Vagina (tissue), 2 donors: ENCODE measurements at regions of chr18 and their contacts with region 1.

Region 1: DNA sequence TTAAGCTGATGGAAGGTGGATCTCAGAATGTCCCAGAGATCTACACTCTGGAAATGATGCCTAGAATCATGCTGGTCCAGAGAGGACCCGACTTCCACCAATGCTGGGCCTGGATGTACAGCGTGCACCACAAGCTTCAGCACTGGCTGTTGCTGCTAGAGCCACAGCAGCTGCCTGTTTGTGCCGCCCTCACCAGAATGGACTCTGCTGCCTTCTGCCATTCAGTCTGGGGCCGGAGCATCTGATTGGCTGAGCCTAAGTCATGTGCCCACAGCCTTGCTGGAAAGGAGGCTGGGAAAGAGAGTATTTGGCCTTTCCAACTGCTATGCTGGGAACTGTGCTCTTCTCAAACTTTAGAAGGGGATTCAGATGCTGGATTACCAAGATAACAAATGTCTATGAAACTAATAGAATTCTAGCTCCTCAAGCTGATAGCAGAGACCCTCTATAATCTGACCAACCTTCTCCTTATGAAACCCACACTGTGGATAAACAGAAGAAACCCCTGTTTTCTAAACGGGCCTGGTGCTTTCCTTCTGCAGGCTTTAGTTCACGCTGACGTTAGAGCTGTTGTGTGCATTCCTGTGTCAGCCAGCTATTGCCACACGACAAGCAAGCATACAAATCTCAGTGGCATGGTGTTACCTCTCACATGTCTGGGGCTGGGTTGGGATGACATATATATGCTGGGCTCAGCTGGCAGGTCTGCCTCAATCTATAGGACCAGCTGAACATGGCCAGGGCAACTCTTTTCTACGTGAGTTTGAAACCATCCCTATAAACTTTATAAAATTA is 4.1 kb upstream of the LOXHD1 start:
- DNase-seq: no peak
- H3K4me3 ChIP-seq: no peak overlapping the region
- H3K27ac ChIP-seq: no peak overlapping the region
- H3K4me1 ChIP-seq: no peaks in the 10 kb centered on the region
- H3K27me3 ChIP-seq: no peaks in the 10 kb centered on the region
- CTCF ChIP-seq: no peak
- POLR2A ChIP-seq: no peak

Region 2: DNA sequence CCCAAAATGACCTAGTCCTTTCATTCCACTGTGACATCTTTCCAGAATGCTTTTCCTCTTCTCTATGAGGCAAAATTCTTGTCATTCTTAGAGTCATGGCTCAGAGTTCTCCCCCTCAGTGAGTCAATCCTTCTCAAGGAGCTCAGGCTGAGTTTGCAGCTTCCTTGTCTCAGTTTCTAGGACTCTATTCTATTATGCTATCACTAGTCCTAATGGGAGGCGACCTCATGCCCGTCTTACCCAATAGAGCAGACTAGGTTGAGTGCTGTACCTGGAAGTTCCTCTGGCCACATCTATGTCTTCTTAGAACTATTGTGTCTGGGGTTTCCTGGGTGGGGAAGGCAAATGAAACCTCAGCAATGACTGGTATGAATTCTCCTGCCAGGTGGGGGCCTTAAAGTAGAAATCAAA is 505.5 kb before region 1 on chr18:
- intact Hi-C with region 1: loop called (anchors 10 kb)
- DNase-seq: no peak
- H3K4me3 ChIP-seq: no peak overlapping the region
- H3K27ac ChIP-seq: no peak overlapping the region
- H3K4me1 ChIP-seq: no peaks in the 10 kb centered on the region
- H3K27me3 ChIP-seq: no peaks in the 10 kb centered on the region
- CTCF ChIP-seq: no peak
- POLR2A ChIP-seq: no peak

Region 3: GRCh38 chr18:46173393-46174341 is 487.5 kb before region 1 on chr18:
- intact Hi-C with region 1: loop called (anchors 5 kb)
- DNase-seq: no peak
- H3K4me3 ChIP-seq: peak overlapping the region; percentile 97 to 99
- H3K27ac ChIP-seq: peak overlapping the region; percentile 85
- H3K4me1 ChIP-seq: peaks cover 41% of the 10 kb centered on the region
- H3K27me3 ChIP-seq: no peaks in the 10 kb centered on the region
- CTCF ChIP-seq: peak; percentile 60 to 94 (median 62)
- POLR2A ChIP-seq: no peak

Region 4: DNA sequence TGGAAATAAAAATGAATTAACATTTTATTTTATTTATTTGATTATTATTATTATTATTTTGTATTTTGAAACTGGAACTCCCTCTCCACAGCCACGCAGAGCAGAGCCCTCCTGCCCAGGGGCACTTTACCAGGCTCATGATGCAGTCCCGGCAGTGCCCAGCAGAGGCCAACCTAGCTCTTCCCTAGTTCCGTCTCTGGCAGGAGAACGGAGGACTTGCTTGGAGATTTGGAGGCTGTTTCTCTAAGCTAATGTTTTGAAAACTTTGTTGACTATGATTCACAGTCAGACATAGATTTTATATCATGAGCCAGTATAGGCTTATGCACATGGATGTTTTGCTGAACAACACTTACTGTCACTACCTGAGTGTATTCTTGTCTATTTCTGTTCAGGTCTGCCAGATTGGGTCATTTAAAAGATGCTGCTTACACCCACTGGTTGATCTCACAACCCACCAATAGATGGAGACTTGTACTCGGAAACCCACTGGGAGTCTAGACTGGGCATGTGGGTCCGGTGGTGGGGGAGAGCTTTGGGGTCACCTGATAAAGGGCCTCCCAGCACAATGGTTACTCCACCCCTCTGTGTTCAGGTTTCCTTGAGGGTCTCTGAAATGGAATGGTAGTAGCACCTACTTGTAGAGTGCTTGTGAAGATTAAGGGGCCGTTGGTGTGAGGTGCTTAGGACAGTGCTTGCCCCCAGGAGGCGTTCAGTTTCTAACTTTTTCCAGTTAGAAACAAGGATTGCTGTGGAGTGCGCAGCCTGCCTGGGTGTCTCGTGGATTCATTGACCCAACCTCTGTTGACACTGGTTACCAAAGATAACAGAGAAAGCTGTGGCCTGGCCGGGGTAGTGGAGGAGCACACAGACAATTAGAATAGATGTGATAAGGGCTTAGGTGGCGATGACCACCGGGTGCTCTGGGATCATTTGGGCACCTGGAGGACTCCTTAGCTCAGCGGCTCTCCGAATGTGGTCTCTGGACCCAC is 379.7 kb before region 1 on chr18:
- intact Hi-C with region 1: loop called (anchors 5 kb)
- DNase-seq: no peak
- H3K4me3 ChIP-seq: no peak overlapping the region
- H3K27ac ChIP-seq: no peak overlapping the region
- H3K4me1 ChIP-seq: no peaks in the 10 kb centered on the region
- H3K27me3 ChIP-seq: no peaks in the 10 kb centered on the region
- CTCF ChIP-seq: peak; percentile 64 to 83 (median 77)
- POLR2A ChIP-seq: no peak

Region 5: GRCh38 chr18:46424898-46425297 is 236.3 kb before region 1 on chr18:
- intact Hi-C with region 1: no loop called
- DNase-seq: peak; percentile 78 to 85
- H3K4me3 ChIP-seq: no peak overlapping the region
- H3K27ac ChIP-seq: no peak overlapping the region
- H3K4me1 ChIP-seq: no peaks in the 10 kb centered on the region
- H3K27me3 ChIP-seq: no peaks in the 10 kb centered on the region
- CTCF ChIP-seq: no peak
- POLR2A ChIP-seq: no peak